ENCODE measurements at regions of chr19 and their contacts with region 1.

Region 1: DNA sequence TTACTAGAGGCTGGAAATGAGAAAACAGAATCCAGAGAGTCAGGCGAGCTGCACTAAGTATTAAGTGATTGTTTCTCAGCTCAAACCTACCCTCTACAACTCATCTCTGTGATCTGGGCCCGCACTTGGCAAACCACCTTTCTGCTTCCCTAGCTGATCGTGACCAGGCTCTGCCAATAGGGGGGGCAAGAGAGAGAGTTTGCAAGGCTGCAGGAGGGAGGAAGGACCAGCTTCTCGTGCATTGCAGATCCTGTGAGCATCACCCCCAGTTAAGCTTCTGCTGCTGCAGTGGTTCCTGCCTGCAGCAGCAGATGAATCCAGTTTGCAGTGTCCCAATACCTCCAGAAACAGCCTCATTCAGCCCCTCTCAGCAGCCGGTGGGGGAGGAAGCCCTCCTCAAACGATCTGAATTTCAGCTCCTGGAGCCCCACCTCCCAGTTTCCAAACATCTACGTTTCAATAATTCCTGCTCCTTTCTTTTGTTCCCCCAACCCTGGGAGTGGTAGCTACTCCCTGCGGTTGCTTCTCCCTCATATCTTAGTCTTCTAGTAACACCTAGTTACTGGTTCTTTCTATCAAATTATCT is 20.0 kb downstream of the XRCC1 start:
- DNase-seq: peak; percentile 78 to 87
- ATAC-seq: peak; percentile 87 to 94
- H3K4me3 ChIP-seq: no peak overlapping the region
- H3K27ac ChIP-seq: no peak overlapping the region
- H3K4me1 ChIP-seq: no peaks in the 10 kb centered on the region
- CTCF ChIP-seq: peak; percentile 81
- EP300 ChIP-seq: no peak
- POLR2A ChIP-seq: no peak
- RAD21 ChIP-seq: peak; percentile 55 to 77

Region 2: DNA sequence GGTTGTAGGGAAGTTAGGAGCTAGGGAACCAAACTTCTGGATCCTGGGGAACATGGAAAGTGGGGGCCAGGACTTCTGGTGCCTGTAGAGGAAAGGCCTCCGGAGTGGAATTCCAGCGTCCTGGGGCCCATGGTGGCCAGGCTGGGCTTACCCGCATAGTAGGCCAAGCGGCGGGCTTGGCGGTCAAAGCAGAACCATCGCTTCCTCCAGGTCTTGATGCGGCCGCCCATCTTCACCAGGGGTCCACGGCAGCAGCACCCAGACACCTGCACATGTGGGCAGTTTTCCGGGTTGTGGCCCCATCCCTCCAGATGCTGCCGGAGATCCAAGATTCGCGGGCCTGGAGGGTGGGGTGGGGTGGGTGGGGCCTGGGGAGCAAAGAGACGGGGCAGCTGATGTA is 76.1 kb before region 1 on chr19:
- CTCF ChIA-PET with region 1: no interaction called
- POLR2A ChIA-PET with region 1: no interaction called
- DNase-seq: no peak
- ATAC-seq: no peak
- H3K4me3 ChIP-seq: no peak overlapping the region
- H3K27ac ChIP-seq: no peak overlapping the region
- H3K4me1 ChIP-seq: 0 out of 3 replicates have a peak, but pooled peaks cover 4% of the 10 kb centered on the region
- CTCF ChIP-seq: no peak
- EP300 ChIP-seq: no peak
- POLR2A ChIP-seq: no peak
- RAD21 ChIP-seq: no peak

Region 3: GRCh38 chr19:43532962-43533545 is 22.2 kb before region 1 on chr19 and contains the start of gene ZNF575:
- CTCF ChIA-PET with region 1: interaction called, 167 read pairs
- POLR2A ChIA-PET with region 1: interaction called, 5 read pairs
- DNase-seq: peak; percentile 95 to 99
- ATAC-seq: peak; percentile 70 to 83
- H3K4me3 ChIP-seq: peak within 1 kb of the TSS; percentile 57
- H3K27ac ChIP-seq: peak within 1 kb of the TSS; percentile 90 to 93
- H3K4me1 ChIP-seq: peaks cover 14% of the 10 kb centered on the region
- CTCF ChIP-seq: no peak
- EP300 ChIP-seq: no peak
- POLR2A ChIP-seq: peak; percentile 79
- RAD21 ChIP-seq: no peak
- polyA plus RNA-seq, gene ZNF575: 0.09 and 0.38 TPM in 2 replicates

Region 4: GRCh38 chr19:43575156-43575950 is 20.1 kb after region 1 on chr19 and contains the starts of genes PINLYP and XRCC1:
- CTCF ChIA-PET with region 1: interaction called, 69 read pairs
- POLR2A ChIA-PET with region 1: no interaction called
- DNase-seq: peak; percentile 99 to 100
- ATAC-seq: peak; percentile 98 to 99
- H3K4me3 ChIP-seq: peak within 1 kb of the TSS; percentile 84
- H3K27ac ChIP-seq: peak within 1 kb of the TSS; percentile 91
- H3K4me1 ChIP-seq: peaks cover 11% of the 10 kb centered on the region
- CTCF ChIP-seq: no peak
- EP300 ChIP-seq: no peak
- POLR2A ChIP-seq: peak; percentile 52
- RAD21 ChIP-seq: no peak
- polyA plus RNA-seq, gene PINLYP: 0.12 TPM in 1 of 2 replicates, not detected in the other
- polyA plus RNA-seq, gene XRCC1: 31.9 and 32.0 TPM in 2 replicates

Region 5: DNA sequence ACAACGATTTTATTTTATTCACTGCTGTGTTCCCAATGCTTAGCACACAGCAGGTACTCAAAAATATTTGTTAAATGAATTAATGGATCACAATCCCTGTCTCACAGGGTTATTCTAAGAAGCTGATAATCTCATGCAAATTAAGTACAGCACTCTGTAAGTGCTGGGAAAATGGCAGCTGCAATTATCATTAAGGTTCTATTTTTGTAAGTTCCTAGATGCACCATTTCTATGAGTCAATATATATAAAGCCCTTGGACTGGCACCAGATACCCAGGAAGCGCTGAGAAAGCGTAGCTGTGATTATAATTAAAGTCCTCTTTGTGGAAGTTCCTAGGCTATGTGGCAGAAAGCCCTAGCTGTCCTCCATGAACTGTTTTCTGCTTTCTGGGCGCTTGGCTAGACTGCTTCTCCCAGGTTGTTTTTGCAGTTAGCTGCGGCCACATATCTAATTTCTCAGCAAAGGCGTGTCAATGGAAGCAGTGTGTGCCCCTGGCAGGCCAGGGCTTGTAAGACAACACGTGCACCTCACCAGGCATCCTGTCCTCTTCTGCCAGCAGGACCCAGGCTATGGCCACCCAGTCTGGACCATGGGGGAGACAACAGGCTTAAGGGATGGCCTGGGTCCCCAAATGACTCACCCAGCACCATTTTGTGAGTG is 51.4 kb after region 1 on chr19:
- CTCF ChIA-PET with region 1: interaction called, 12 read pairs
- POLR2A ChIA-PET with region 1: no interaction called
- DNase-seq: no peak
- ATAC-seq: no peak
- H3K4me3 ChIP-seq: no peak overlapping the region
- H3K27ac ChIP-seq: no peak overlapping the region
- H3K4me1 ChIP-seq: peaks cover 6% of the 10 kb centered on the region; the same call in 2 of the 3 replicates
- CTCF ChIP-seq: no peak
- EP300 ChIP-seq: no peak
- POLR2A ChIP-seq: no peak
- RAD21 ChIP-seq: no peak

Region 6: GRCh38 chr19:43809762-43810696 is 254.8 kb after region 1 on chr19:
- CTCF ChIA-PET with region 1: interaction called, 12 read pairs
- POLR2A ChIA-PET with region 1: no interaction called
- DNase-seq: peak; percentile 46 to 82
- ATAC-seq: peak; percentile 74 to 90
- H3K4me3 ChIP-seq: no peak overlapping the region
- H3K27ac ChIP-seq: no peak overlapping the region
- H3K4me1 ChIP-seq: no peaks in the 10 kb centered on the region
- CTCF ChIP-seq: peak; percentile 75
- EP300 ChIP-seq: no peak
- POLR2A ChIP-seq: no peak
- RAD21 ChIP-seq: peak; percentile 72 to 90

Region 7: DNA sequence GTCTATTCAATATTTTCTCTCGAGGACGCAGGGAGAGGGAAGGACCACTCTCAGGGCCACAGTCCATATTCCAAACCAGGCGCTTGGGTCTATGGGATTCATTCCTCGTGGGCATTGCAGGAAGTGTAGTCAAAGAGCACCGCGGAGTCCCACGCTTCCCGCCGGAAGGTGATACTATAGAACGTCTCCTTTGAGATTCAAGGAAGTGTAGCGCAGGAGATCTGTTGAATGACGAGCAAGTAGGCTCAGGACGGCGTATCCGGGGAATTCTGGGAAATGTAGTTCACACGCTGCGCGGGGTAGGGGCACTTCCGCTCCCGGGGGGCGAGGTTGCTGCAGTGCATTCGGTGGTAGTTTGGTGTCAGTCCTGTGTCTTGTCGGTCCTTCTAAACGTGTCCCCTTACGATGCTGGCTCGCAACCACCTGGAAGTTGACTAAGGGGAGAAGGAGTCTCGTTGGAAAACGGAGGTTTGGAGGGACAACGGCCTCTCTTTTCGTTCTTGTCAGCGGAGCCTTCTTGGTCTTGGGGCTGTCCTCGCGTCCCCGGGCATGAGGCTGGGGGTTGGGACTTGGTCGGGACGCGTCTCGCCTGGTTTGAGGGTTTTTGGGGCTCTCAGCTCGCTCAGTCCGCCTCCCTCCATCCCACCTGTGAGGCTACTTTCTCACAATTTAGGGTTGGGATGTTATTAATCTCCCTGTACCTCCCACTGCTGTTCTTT is 516.7 kb after region 1 on chr19 and contains the start of gene ZNF284:
- CTCF ChIA-PET with region 1: no interaction called
- POLR2A ChIA-PET with region 1: no interaction called
- DNase-seq: peak; percentile 95 to 96
- ATAC-seq: peak; percentile 98 to 100
- H3K4me3 ChIP-seq: peak within 1 kb of the TSS; percentile 55
- H3K27ac ChIP-seq: peak within 1 kb of the TSS; percentile 44 to 72
- H3K4me1 ChIP-seq: no peaks in the 10 kb centered on the region
- CTCF ChIP-seq: no peak
- EP300 ChIP-seq: no peak
- POLR2A ChIP-seq: no peak
- RAD21 ChIP-seq: no peak
- polyA plus RNA-seq, gene ZNF284: 1.0 and 1.2 TPM in 2 replicates

Measured in A549 (cell line).